ENCODE measurements at regions of chr20 and their contacts with region 1.

Region 1: GRCh38 chr20:60993433-60994044 is 258.5 kb upstream of the CDH4 start:
- DNase-seq: no peak
- ATAC-seq: no peak
- H3K4me3 Mint-ChIP-seq: no peak overlapping the region
- H3K27ac Mint-ChIP-seq: no peak overlapping the region
- H3K4me1 Mint-ChIP-seq: no peaks in the 10 kb centered on the region
- H3K27me3 Mint-ChIP-seq: no peaks in the 10 kb centered on the region
- CTCF ChIP-seq: no peak

Region 2: DNA sequence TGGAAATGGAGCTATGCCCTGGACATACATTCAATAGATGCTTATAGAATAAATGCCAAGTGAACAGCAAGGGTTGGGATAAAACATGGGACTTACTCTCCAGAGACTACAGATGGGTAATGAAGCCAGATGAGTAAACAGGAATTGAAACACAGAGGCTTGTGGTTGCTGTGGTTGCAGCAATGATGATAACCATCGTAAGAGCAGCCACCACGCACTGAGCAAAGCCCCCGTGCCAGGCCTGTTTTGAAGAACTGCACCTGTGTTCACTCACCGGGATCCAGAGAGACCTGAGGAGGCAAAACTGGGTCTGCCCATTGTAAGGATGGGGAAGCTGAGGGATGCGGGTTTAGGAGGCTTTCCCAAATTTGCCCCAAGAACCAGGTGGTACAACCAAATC is 172.6 kb before region 1 on chr20:
- CTCF ChIA-PET with region 1: no interaction called
- POLR2A ChIA-PET with region 1: no interaction called
- intact Hi-C with region 1: no loop called
- DNase-seq: no peak
- ATAC-seq: no peak
- H3K4me3 Mint-ChIP-seq: no peak overlapping the region
- H3K27ac Mint-ChIP-seq: no peak overlapping the region
- H3K4me1 Mint-ChIP-seq: no peaks in the 10 kb centered on the region
- H3K27me3 Mint-ChIP-seq: no peaks in the 10 kb centered on the region
- CTCF ChIP-seq: no peak

Region 3: GRCh38 chr20:61015602-61016001 is 22.1 kb after region 1 on chr20:
- CTCF ChIA-PET with region 1: no interaction called
- POLR2A ChIA-PET with region 1: no interaction called
- intact Hi-C with region 1: loop called (anchors 1 kb)
- DNase-seq: no peak
- ATAC-seq: no peak
- H3K4me3 Mint-ChIP-seq: no peak overlapping the region
- H3K27ac Mint-ChIP-seq: no peak overlapping the region
- H3K4me1 Mint-ChIP-seq: no peaks in the 10 kb centered on the region
- H3K27me3 Mint-ChIP-seq: no peaks in the 10 kb centered on the region
- CTCF ChIP-seq: no peak